ENCODE measurements at regions of chr12 and their contacts with region 1.

Region 1: DNA sequence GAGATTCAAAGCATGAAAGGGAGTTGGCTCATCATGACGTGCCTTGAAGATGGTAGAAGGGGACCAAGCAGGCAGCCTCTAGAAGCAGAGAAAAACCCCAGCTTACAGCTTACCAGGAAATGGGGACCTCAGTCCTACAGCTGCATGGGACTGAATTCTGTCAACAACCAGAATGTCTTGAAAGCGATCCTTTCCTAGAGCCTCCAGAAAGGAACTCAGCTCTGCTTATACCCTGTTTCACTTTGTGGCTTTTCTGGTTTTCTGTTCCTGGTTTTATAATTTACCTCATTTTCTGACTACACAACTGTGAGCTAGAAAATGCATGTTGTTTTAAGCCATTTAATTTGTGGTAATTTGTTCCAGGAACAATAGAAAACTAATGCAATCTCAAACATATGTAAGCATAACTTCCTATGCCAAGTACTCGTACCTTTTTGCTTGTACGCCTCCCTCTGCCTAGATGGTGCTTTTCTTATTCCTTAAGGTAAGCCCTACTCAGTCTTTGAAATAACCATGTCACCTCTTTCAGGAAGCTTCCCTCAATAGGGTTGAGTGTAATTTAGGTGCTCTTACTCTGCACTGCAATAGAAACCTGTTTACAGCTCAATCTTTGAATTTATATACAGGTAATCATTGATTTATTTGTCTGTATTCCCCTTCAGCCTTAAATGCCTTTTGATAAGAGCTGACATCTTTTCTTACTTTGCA is 348.8 kb downstream of the TMEM117 start:
- DNase-seq: no peak
- ATAC-seq: no peak
- H3K4me3 ChIP-seq: no peak overlapping the region
- H3K4me3 Mint-ChIP-seq: no peak overlapping the region
- H3K27ac ChIP-seq: no peak overlapping the region
- H3K27ac Mint-ChIP-seq: no peak overlapping the region
- H3K4me1 ChIP-seq: no peaks in the 10 kb centered on the region
- H3K4me1 Mint-ChIP-seq: no peaks in the 10 kb centered on the region
- H3K27me3 ChIP-seq: no peaks in the 10 kb centered on the region
- H3K27me3 Mint-ChIP-seq: no peaks in the 10 kb centered on the region
- CTCF ChIP-seq: no peak

Region 2: DNA sequence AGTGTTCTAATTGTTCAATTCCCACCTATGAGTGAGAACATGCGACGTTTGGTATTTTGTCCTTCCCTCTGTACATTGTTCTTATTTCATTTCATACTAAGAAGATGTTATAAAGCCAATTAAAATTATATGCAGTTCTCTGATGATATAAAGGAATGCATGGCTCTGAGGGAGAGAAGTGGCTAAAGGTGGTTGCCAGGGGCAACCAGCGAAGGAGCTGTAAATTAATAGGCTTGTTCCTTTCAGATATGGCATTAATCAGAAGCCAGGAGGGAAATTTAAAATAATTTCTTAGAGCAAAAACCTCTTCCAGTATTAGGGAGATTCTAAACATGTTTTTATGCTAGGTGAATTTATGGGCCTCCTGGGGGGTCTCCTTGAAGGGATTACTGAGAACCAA is 121.0 kb before region 1 on chr12:
- intact Hi-C with region 1: no loop called
- DNase-seq: no peak
- ATAC-seq: no peak
- H3K4me3 ChIP-seq: no peak overlapping the region
- H3K4me3 Mint-ChIP-seq: no peak overlapping the region
- H3K27ac ChIP-seq: no peak overlapping the region
- H3K27ac Mint-ChIP-seq: no peak overlapping the region
- H3K4me1 ChIP-seq: no peaks in the 10 kb centered on the region
- H3K4me1 Mint-ChIP-seq: no peaks in the 10 kb centered on the region
- H3K27me3 ChIP-seq: no peaks in the 10 kb centered on the region
- H3K27me3 Mint-ChIP-seq: no peaks in the 10 kb centered on the region
- CTCF ChIP-seq: no peak

Region 3: DNA sequence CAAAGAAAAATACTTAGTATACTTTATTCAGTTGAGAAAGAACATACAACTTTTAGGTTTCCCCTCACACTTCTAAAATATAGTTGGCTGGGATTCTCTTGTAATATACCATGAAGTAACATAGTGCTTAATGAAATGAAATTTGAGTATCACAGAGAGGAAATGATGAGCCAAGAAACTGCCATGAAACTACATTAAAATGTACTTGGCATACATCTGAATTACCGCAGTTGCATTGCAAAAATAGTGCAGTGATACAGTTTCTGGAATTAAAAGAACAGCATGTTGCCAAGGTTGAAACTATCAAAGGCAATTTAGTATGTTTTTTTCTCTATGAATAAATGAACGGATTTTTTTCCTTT is 40.5 kb after region 1 on chr12:
- intact Hi-C with region 1: no loop called
- DNase-seq: no peak
- ATAC-seq: no peak
- H3K4me3 ChIP-seq: no peak overlapping the region
- H3K4me3 Mint-ChIP-seq: no peak overlapping the region
- H3K27ac ChIP-seq: no peak overlapping the region
- H3K27ac Mint-ChIP-seq: no peak overlapping the region
- H3K4me1 ChIP-seq: no peaks in the 10 kb centered on the region
- H3K4me1 Mint-ChIP-seq: peaks cover 0 to 4% of the 10 kb centered on the region in 2 donors
- H3K27me3 ChIP-seq: no peaks in the 10 kb centered on the region
- H3K27me3 Mint-ChIP-seq: no peaks in the 10 kb centered on the region
- CTCF ChIP-seq: no peak

Region 4: GRCh38 chr12:44235674-44236073 is 51.0 kb after region 1 on chr12:
- intact Hi-C with region 1: loop called (anchors 1 kb)
- DNase-seq: no peak
- ATAC-seq: no peak
- H3K4me3 ChIP-seq: no peak overlapping the region
- H3K4me3 Mint-ChIP-seq: no peak overlapping the region
- H3K27ac ChIP-seq: no peak overlapping the region
- H3K27ac Mint-ChIP-seq: no peak overlapping the region
- H3K4me1 ChIP-seq: no peaks in the 10 kb centered on the region
- H3K4me1 Mint-ChIP-seq: no peaks in the 10 kb centered on the region
- H3K27me3 ChIP-seq: no peaks in the 10 kb centered on the region
- H3K27me3 Mint-ChIP-seq: no peaks in the 10 kb centered on the region
- CTCF ChIP-seq: no peak